ENCODE measurements at regions of chr3 and their contacts with region 1.

Region 1: GRCh38 chr3:189937307-189938124 is 183.2 kb downstream of the P3H2 start:
- DNase-seq: peak; percentile 100
- H3K4me3 ChIP-seq: no peak overlapping the region
- H3K27ac ChIP-seq: peak overlapping the region; percentile 99
- H3K4me1 ChIP-seq: peaks cover 47% of the 10 kb centered on the region
- H3K27me3 ChIP-seq: no peaks in the 10 kb centered on the region
- CTCF ChIP-seq: no peak

Region 2: DNA sequence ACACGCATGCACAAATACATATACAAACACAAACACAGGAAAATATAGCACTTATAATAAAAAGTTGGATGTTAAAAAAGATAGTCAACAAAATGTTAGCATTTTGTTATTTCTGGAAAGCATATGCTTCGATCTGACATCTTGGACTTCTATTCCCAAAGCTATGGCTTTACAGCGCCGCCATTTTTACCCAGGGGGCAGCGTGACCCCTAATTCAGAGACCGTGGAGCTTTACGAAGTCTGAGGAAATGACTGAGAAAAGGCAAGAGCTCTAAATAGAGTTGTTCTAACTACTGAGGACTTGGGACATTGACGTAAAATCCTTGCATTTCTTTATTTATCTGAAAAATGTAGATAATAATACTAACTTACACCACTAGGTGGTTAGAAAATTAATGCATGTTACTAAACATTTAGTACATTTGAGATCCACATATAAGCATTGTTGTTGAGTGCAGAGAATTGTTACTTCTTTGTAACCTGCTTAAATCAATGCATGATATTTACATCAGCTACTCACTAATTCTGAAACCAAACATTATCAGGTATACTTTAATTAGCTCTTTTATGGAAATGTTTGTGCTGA is 150.9 kb before region 1 on chr3:
- CTCF ChIA-PET with region 1: no interaction called
- dilution Hi-C with region 1: no loop called
- in situ Hi-C with region 1: no loop called
- intact Hi-C with region 1: loop called (anchors 2 kb)
- DNase-seq: no peak
- H3K4me3 ChIP-seq: no peak overlapping the region
- H3K27ac ChIP-seq: no peak overlapping the region
- H3K4me1 ChIP-seq: peaks cover 12% of the 10 kb centered on the region
- H3K27me3 ChIP-seq: no peaks in the 10 kb centered on the region
- CTCF ChIP-seq: peak in 1 of 2 donors; percentile 32

Region 3: DNA sequence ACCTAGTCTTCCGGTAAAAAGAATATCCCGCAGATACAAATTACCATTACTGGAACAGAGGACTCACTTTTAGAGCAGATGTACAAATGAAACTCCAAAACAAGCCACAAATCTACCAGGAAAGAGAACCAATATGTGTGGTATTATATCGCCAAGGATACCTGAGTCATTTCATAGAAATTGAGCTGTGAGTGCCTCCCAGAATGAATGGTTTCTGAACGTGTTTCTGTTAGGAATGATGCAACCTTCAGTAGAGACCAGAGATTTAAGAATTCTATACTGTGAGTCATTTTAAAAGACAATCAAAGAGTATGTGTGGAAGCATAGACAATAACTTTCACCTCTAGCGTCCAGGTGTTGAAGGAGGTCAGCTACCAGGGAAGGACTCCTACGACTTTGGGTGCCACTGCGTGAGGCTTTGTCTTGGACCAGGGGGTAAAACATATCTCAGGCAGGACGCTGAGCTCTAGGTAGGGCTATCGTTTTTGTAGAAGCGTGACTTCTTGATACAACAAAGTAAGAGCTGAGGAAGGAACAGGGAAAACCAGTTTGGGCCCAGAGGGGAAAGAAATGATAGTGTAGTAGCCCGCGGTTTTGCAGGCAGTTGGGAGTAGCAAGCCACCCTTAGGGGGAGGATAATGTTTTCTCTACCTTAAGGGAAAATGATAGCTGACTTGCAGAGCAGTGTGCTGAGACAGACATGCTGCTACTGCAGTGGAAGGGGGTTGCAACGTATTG is 95.9 kb before region 1 on chr3:
- CTCF ChIA-PET with region 1: no interaction called
- dilution Hi-C with region 1: no loop called
- in situ Hi-C with region 1: no loop called
- intact Hi-C with region 1: loop called (anchors 2 kb)
- DNase-seq: peak; percentile 98
- H3K4me3 ChIP-seq: peak overlapping the region in 2 of 3 experiments; percentile 6 to 22
- H3K27ac ChIP-seq: peak overlapping the region; percentile 99
- H3K4me1 ChIP-seq: peaks cover 67% of the 10 kb centered on the region
- H3K27me3 ChIP-seq: no peaks in the 10 kb centered on the region
- CTCF ChIP-seq: no peak

Region 4: GRCh38 chr3:189902230-189903186 is 35.0 kb before region 1 on chr3:
- CTCF ChIA-PET with region 1: no interaction called
- dilution Hi-C with region 1: no loop called
- in situ Hi-C with region 1: loop called in 1 of 2 experiments (anchors 5 kb)
- intact Hi-C with region 1: loop called (anchors 1 kb)
- DNase-seq: no peak
- H3K4me3 ChIP-seq: no peak overlapping the region
- H3K27ac ChIP-seq: no peak overlapping the region
- H3K4me1 ChIP-seq: peaks cover 20% of the 10 kb centered on the region
- H3K27me3 ChIP-seq: no peaks in the 10 kb centered on the region
- CTCF ChIP-seq: no peak

Region 5: GRCh38 chr3:189908646-189909045 is 28.9 kb before region 1 on chr3:
- CTCF ChIA-PET with region 1: no interaction called
- dilution Hi-C with region 1: no loop called
- in situ Hi-C with region 1: loop called in 1 of 2 experiments (anchors 5 kb)
- intact Hi-C with region 1: loop called (anchors 1 kb)
- DNase-seq: peak; percentile 87
- H3K4me3 ChIP-seq: no peak overlapping the region
- H3K27ac ChIP-seq: peak overlapping the region; percentile 100
- H3K4me1 ChIP-seq: peaks cover 49% of the 10 kb centered on the region
- H3K27me3 ChIP-seq: no peaks in the 10 kb centered on the region
- CTCF ChIP-seq: no peak

Region 6: DNA sequence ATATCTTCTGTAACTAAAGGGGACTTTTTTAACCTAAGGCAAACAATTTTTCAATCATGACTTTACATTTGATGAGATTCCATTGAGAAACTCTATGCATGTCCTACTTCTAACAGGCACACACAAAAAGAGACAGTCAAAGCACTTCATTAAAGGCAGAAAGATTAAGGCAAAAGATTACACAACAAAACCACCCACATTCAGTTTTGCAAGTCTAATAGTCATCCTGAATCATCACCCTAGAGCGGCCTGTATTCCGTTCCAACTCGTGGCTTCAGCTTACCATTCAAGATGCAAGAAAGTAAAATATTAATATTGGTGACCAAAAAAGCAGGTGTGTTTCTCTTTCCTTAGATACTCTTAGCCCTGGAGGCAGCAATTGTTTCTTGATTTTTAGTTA is 22.7 kb before region 1 on chr3:
- CTCF ChIA-PET with region 1: no interaction called
- dilution Hi-C with region 1: no loop called
- in situ Hi-C with region 1: no loop called
- intact Hi-C with region 1: loop called (anchors 1 kb)
- DNase-seq: peak; percentile 96
- H3K4me3 ChIP-seq: peak overlapping the region in 1 of 3 experiments; percentile 12
- H3K27ac ChIP-seq: peak overlapping the region; percentile 96
- H3K4me1 ChIP-seq: peaks cover 48% of the 10 kb centered on the region
- H3K27me3 ChIP-seq: no peaks in the 10 kb centered on the region
- CTCF ChIP-seq: no peak